HepG2 (cell line): ENCODE measurements at regions of chr10 and their contacts with region 1.

Region 1: DNA sequence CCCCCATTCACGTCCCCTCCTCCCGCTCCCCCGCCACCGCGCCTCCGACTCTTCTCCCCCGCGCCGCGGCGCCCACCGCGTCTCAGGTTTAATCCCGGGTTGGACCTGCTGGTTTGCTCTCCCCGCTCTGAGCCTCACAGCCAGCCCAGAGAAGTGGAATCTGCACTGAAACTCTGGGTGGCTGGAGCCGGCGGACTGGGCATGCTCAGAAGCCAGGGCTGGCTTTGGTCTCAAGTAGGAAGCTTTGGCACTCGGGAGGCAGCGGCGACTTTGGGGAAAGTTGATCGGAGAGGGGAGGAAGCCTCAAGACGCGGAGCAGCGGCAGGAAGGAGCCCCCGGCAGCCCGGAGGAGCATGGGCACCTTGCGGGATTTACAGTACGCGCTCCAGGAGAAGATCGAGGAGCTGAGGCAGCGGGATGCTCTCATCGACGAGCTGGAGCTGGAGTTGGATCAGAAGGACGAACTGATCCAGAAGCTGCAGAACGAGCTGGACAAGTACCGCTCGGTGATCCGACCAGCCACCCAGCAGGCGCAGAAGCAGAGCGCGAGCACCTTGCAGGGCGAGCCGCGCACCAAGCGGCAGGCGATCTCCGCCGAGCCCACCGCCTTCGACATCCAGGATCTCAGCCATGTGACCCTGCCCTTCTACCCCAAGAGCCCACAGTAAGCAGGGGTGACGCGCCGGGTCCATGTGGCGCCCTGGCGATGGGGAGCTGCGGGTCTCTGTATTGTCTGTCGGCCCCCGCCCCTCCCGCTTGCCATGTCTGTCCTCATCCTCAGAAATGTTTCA is at the start of gene PRKG1:
- DNase-seq: peak; percentile 5
- ATAC-seq: peak; percentile 97
- H3K4me3 ChIP-seq: peak within 1 kb of the TSS; percentile 20 to 52 (median 40); a peak in 4 of 6 replicates
- H3K27ac ChIP-seq: no peak within 1 kb of the TSS
- H3K4me1 ChIP-seq: peaks cover 9% of the 10 kb centered on the region; the same call in 1 of the 2 replicates
- H3K27me3 ChIP-seq: peaks cover 3 to 30% of the 10 kb centered on the region in 2 experiments; a peak in 3 of 5 replicates
- CTCF ChIP-seq: no peak
- EP300 ChIP-seq: no peak
- POLR2A ChIP-seq: no peak
- RAD21 ChIP-seq: no peak
- total RNA-seq, gene PRKG1: not detected in 2 replicates

Region 2: DNA sequence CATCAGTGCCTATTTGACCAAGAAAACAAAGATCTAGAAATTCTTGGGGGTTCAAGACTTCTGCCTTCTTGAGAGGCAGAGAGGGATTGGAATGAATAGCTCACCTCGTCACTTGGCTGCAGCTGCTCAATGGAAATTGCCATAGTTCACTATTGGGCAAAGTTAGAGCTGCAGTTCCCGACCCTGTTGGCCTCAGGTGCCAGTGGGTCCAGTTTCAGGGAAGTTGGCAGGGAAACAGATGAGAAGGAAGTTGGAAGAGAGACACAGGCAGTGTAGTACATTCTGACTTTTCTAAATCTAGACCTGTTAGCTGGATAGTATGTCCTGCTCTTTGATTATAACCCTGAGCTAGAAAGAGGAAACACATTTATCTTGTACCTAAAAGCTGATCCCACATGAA is 208.1 kb before region 1 on chr10:
- CTCF ChIA-PET with region 1: no interaction called
- POLR2A ChIA-PET with region 1: no interaction called
- in situ Hi-C with region 1: no loop called
- intact Hi-C with region 1: no loop called
- DNase-seq: no peak
- ATAC-seq: no peak
- H3K4me3 ChIP-seq: no peak overlapping the region
- H3K27ac ChIP-seq: no peak overlapping the region
- H3K4me1 ChIP-seq: no peaks in the 10 kb centered on the region
- H3K27me3 ChIP-seq: no peaks in the 10 kb centered on the region
- CTCF ChIP-seq: no peak
- EP300 ChIP-seq: no peak
- POLR2A ChIP-seq: no peak
- RAD21 ChIP-seq: no peak

Region 3: GRCh38 chr10:51010977-51011376 is 63.5 kb before region 1 on chr10:
- CTCF ChIA-PET with region 1: no interaction called
- POLR2A ChIA-PET with region 1: no interaction called
- in situ Hi-C with region 1: no loop called
- intact Hi-C with region 1: loop called (anchors 5 kb)
- DNase-seq: peak; percentile 27
- ATAC-seq: peak; percentile 64; the same call in 2 of the 3 replicates
- H3K4me3 ChIP-seq: no peak overlapping the region
- H3K27ac ChIP-seq: no peak overlapping the region
- H3K4me1 ChIP-seq: no peaks in the 10 kb centered on the region
- H3K27me3 ChIP-seq: peaks cover 0 to under 1% of the 10 kb centered on the region in 2 experiments; a peak in 2 of 5 replicates
- CTCF ChIP-seq: peak; percentile 66
- EP300 ChIP-seq: no peak
- POLR2A ChIP-seq: no peak
- RAD21 ChIP-seq: no peak

Region 4: DNA sequence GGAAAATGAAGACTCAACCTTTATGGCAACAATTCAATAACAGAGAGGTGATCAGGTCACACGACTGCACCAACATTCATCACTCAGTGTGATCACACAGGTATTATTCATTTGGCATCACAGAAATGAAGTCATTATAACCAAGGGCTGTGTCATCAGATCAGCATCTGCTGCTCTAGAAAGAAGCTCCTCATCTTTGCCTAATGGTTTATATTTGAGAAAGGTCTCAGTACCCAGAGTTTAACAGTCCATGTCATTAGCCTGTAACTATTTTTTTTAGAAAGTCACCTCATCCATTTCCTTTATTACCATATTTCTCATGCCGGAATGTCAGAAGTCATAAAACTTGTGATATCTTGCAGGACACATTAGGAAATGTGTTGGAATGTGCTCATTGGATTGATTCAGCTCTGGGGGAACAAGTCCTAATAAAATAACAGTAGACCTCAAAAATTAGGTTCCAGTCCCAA is 45.2 kb before region 1 on chr10:
- CTCF ChIA-PET with region 1: no interaction called
- POLR2A ChIA-PET with region 1: no interaction called
- in situ Hi-C with region 1: no loop called
- intact Hi-C with region 1: no loop called
- DNase-seq: no peak
- ATAC-seq: no peak
- H3K4me3 ChIP-seq: no peak overlapping the region
- H3K27ac ChIP-seq: no peak overlapping the region
- H3K4me1 ChIP-seq: no peaks in the 10 kb centered on the region
- H3K27me3 ChIP-seq: no peaks in the 10 kb centered on the region
- CTCF ChIP-seq: no peak
- EP300 ChIP-seq: no peak
- POLR2A ChIP-seq: no peak
- RAD21 ChIP-seq: no peak

Region 5: GRCh38 chr10:51758366-51758765 is 683.9 kb after region 1 on chr10:
- CTCF ChIA-PET with region 1: no interaction called
- POLR2A ChIA-PET with region 1: no interaction called
- in situ Hi-C with region 1: no loop called
- intact Hi-C with region 1: no loop called
- DNase-seq: no peak
- ATAC-seq: no peak
- H3K4me3 ChIP-seq: no peak overlapping the region
- H3K27ac ChIP-seq: no peak overlapping the region
- H3K4me1 ChIP-seq: no peaks in the 10 kb centered on the region
- H3K27me3 ChIP-seq: no peaks in the 10 kb centered on the region
- CTCF ChIP-seq: no peak
- EP300 ChIP-seq: no peak
- POLR2A ChIP-seq: no peak
- RAD21 ChIP-seq: no peak